A673 (cell line): ENCODE measurements at regions of chr19 and their contacts with region 1.

Region 1: DNA sequence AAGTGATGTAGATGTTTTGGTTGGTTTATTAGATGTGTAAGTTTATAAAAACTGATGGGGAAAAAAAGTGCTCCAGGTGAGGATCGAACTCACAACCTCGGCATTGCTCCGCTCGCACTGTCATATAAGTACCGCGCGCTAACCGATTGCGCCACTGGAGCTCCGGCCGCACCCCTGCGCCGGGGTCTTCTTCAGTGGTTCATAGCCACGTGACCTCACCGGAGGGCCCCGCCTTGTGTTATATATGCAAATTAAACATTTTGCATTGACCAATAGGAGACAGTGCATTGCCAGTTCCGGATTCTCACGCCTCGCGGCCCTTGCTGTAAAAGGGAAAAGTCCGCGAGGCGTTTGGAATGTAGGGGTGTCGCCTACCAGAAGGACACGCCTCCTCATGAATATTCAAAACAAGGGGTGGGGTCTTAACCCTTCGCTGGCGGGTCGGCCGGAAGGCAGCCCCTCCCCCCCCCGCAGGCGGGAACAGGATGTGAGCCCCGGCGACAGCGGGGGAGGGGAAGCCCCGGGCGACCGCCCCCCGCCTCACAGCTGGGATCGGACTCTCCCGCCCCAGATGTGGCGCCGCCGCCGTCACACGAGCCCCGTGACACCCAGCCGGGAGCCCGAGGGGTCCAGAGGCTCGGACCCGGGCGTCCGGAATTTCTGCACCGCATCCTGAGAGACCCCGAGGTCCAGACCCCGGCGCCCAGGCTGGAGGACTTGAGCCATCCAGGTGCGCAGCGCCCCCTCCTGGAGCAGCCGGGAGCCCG is at the start of gene PLEKHG2:
- DNase-seq: peak; percentile 99
- H3K4me3 ChIP-seq: peak within 1 kb of the TSS; percentile 100
- H3K27ac ChIP-seq: peak within 1 kb of the TSS; percentile 97
- H3K4me1 ChIP-seq: peaks cover 46% of the 10 kb centered on the region
- H3K27me3 ChIP-seq: no peaks in the 10 kb centered on the region
- CTCF ChIP-seq: peak; percentile 90
- total RNA-seq, gene PLEKHG2: 99.1 and 99.4 TPM in 2 replicates

Region 2: GRCh38 chr19:39124136-39124764 is 288.0 kb before region 1 on chr19:
- CTCF ChIA-PET with region 1: no interaction called
- POLR2A ChIA-PET with region 1: no interaction called
- intact Hi-C with region 1: loop called (anchors 5 kb)
- DNase-seq: no peak
- H3K4me3 ChIP-seq: no peak overlapping the region
- H3K27ac ChIP-seq: no peak overlapping the region
- H3K4me1 ChIP-seq: no peaks in the 10 kb centered on the region
- H3K27me3 ChIP-seq: no peaks in the 10 kb centered on the region
- CTCF ChIP-seq: no peak

Region 3: GRCh38 chr19:39335168-39335548 is 77.1 kb before region 1 on chr19:
- CTCF ChIA-PET with region 1: no interaction called
- POLR2A ChIA-PET with region 1: no interaction called
- intact Hi-C with region 1: no loop called
- DNase-seq: no peak
- H3K4me3 ChIP-seq: no peak overlapping the region
- H3K27ac ChIP-seq: no peak overlapping the region
- H3K4me1 ChIP-seq: no peaks in the 10 kb centered on the region
- H3K27me3 ChIP-seq: no peaks in the 10 kb centered on the region
- CTCF ChIP-seq: no peak

Region 4: GRCh38 chr19:39397360-39398296 is 14.7 kb before region 1 on chr19:
- CTCF ChIA-PET with region 1: interaction called, 16 read pairs
- POLR2A ChIA-PET with region 1: no interaction called
- intact Hi-C with region 1: loop called (anchors 1 kb)
- DNase-seq: peak; percentile 91
- H3K4me3 ChIP-seq: no peak overlapping the region
- H3K27ac ChIP-seq: peak overlapping the region; percentile 33
- H3K4me1 ChIP-seq: peaks cover 15% of the 10 kb centered on the region
- H3K27me3 ChIP-seq: no peaks in the 10 kb centered on the region
- CTCF ChIP-seq: peak; percentile 94

Region 5: DNA sequence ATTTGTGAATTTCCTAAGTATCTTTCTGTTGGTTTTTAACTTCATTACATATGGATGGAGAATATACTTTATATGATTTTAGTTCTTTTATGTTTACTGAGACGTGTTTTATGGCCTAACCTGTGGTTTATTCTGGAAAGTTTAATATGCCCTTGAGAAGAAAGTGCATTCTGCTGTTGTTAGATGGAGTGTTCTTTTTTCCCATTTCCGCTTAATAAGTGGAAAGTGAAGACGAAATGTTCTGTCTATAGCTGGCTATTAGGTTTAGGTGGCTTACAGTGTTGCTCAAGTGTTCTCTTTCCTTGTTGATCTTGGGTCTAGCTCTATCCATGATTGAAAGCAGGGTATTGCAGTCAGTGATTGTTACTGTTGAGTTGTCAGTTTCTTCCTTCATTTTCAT is 51.1 kb after region 1 on chr19:
- CTCF ChIA-PET with region 1: no interaction called
- POLR2A ChIA-PET with region 1: no interaction called
- intact Hi-C with region 1: no loop called
- DNase-seq: no peak
- H3K4me3 ChIP-seq: no peak overlapping the region
- H3K27ac ChIP-seq: no peak overlapping the region
- H3K4me1 ChIP-seq: no peaks in the 10 kb centered on the region
- H3K27me3 ChIP-seq: no peaks in the 10 kb centered on the region
- CTCF ChIP-seq: no peak

Region 6: DNA sequence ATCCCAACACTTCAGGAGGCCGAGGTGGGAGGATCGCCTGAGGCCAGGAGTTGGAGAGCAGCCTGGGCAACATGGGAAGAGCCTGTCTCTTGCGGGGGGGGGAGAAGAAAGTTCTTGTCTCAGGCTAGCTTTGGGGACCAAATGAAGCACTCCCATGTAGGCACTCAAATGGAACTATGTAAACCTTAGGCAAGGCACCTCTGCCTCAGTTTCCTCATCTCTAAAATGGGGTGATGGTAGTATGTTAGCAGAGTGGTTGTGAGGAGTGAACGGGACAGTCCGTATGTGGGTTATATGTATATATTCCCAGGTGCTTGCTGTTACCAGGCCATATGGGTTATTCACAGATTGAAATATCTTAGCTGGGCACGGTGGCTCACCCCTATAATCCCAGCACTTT is 79.9 kb after region 1 on chr19:
- CTCF ChIA-PET with region 1: no interaction called
- POLR2A ChIA-PET with region 1: no interaction called
- intact Hi-C with region 1: no loop called
- DNase-seq: no peak
- H3K4me3 ChIP-seq: no peak overlapping the region
- H3K27ac ChIP-seq: no peak overlapping the region
- H3K4me1 ChIP-seq: no peaks in the 10 kb centered on the region
- H3K27me3 ChIP-seq: no peaks in the 10 kb centered on the region
- CTCF ChIP-seq: no peak